ENCODE measurements at regions of chr19 and their contacts with region 1.

Region 1: DNA sequence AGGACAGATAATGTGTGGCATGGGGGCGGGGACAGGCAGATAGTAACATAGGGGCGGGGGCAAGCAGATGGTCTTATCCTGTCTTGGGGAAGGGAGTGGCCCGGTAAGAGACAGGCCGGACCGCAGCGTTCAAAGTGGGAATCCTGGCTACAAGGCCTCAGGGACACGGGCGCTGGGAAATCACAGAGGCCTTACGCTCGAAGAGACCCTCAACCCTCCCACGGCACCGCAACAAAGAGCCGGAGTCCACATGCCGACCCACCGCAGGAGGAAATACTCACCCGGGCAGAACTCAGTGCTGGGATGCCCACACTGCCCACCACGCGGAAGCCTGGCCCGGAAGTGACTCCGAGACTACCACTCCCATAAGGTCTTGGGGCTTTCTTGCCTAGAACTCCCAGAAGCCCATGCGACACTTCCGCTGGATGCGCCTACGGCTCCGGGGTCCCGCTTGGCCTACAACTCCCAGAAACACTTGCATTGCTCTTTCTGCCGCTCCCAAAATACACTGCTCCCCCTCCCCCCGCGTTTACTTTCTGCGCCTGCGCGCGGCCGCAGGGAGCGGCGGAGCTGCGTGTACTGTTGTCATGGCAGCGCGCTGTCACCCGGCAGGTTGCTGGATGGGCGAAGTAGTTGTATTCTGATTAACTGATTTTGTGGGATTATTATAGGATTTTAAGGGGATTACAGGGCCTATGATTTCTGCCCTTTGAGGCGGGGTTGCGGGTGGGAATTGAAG is at the start of gene CTU1:
- DNase-seq: peak; percentile 96 to 99
- ATAC-seq: peak; percentile 98 to 99 (median 99)
- H3K4me3 ChIP-seq: peak within 1 kb of the TSS; percentile 67 to 89 (median 75)
- H3K27ac ChIP-seq: peak within 1 kb of the TSS in 9 of 10 donors; percentile 58 to 86 (median 74)
- H3K4me1 ChIP-seq: peaks cover 0 to 24% (median 17%) of the 10 kb centered on the region in 9 donors
- H3K27me3 ChIP-seq: no peaks in the 10 kb centered on the region
- CTCF ChIP-seq: peak in 2 of 9 donors; percentile 7 to 26
- total RNA-seq, gene CTU1: 2.0 to 5.6 (median 3.2) TPM

Region 2: GRCh38 chr19:50230379-50231351 is 877.6 kb before region 1 on chr19:
- intact Hi-C with region 1: no loop called
- DNase-seq: peak in 1 of 2 donors; percentile 37
- ATAC-seq: peak in 2 of 8 donors; percentile 29 to 57
- H3K4me3 ChIP-seq: no peak overlapping the region
- H3K27ac ChIP-seq: peak overlapping the region in 5 of 10 donors; percentile 6 to 68 (median 58)
- H3K4me1 ChIP-seq: peaks cover 0 to 23% (median 8%) of the 10 kb centered on the region in 9 donors
- H3K27me3 ChIP-seq: no peaks in the 10 kb centered on the region
- CTCF ChIP-seq: no peak

Region 3: GRCh38 chr19:50368649-50369570 is 739.3 kb before region 1 on chr19:
- intact Hi-C with region 1: no loop called
- DNase-seq: peak; percentile 80 to 87
- ATAC-seq: peak; percentile 87 to 97 (median 95)
- H3K4me3 ChIP-seq: peak overlapping the region; percentile 38 to 80 (median 72)
- H3K27ac ChIP-seq: peak overlapping the region in 9 of 10 donors; percentile 59 to 91 (median 80)
- H3K4me1 ChIP-seq: peaks cover 0 to 16% (median 5%) of the 10 kb centered on the region in 9 donors
- H3K27me3 ChIP-seq: no peaks in the 10 kb centered on the region
- CTCF ChIP-seq: peak; percentile 78 to 93 (median 90)

Region 4: DNA sequence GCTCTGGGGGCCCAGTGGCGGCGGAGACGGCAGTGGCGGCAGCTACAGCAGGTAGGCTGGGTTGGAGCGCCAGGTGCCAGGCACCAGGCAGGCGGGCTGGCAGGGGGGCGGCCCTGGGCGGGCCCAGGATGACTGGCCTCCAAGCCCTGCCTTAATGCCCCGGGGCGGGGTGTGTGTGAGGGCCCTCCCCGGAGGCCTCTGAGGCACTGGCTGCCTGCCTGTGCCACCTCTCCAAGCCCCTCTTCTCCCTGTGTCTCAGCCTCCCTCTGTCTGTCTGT is 81.7 kb before region 1 on chr19 and contains the start of gene KLK11:
- intact Hi-C with region 1: no loop called
- DNase-seq: no peak
- ATAC-seq: peak in 2 of 8 donors; percentile 32 to 41
- H3K4me3 ChIP-seq: peak within 1 kb of the TSS in 6 of 10 donors; percentile 7 to 41 (median 13)
- H3K27ac ChIP-seq: peak within 1 kb of the TSS in 3 of 10 donors; percentile 23 to 44 (median 42)
- H3K4me1 ChIP-seq: peaks cover 0 to 16% (median 0%) of the 10 kb centered on the region in 9 donors
- H3K27me3 ChIP-seq: peaks cover 0 to 80% (median 43%) of the 10 kb centered on the region in 7 donors
- CTCF ChIP-seq: no peak
- total RNA-seq, gene KLK11: 0.27 to 0.46 (median 0.36) TPM in 4 of 10 donors, not detected in the others

Region 5: GRCh38 chr19:51166846-51167490 is 58.7 kb after region 1 on chr19:
- intact Hi-C with region 1: loop called in 1 of 10 experiments (anchors 5 kb)
- DNase-seq: no peak
- ATAC-seq: peak in 6 of 8 donors; percentile 58 to 79 (median 62)
- H3K4me3 ChIP-seq: no peak overlapping the region
- H3K27ac ChIP-seq: no peak overlapping the region
- H3K4me1 ChIP-seq: peaks cover 0 to 20% (median 0%) of the 10 kb centered on the region in 9 donors
- H3K27me3 ChIP-seq: peaks cover 0 to 38% (median 19%) of the 10 kb centered on the region in 7 donors
- CTCF ChIP-seq: no peak

Region 6: GRCh38 chr19:51367565-51368365 is 259.5 kb after region 1 on chr19:
- intact Hi-C with region 1: loop called in 1 of 10 experiments (anchors 10 kb)
- DNase-seq: peak; percentile 99
- ATAC-seq: peak; percentile 90 to 96 (median 93)
- H3K4me3 ChIP-seq: peak overlapping the region; percentile 60 to 93 (median 80)
- H3K27ac ChIP-seq: peak overlapping the region; percentile 89 to 98 (median 96)
- H3K4me1 ChIP-seq: peaks cover 0 to 50% (median 24%) of the 10 kb centered on the region in 9 donors
- H3K27me3 ChIP-seq: no peaks in the 10 kb centered on the region
- CTCF ChIP-seq: peak in 1 of 9 donors; percentile 6

Region 7: DNA sequence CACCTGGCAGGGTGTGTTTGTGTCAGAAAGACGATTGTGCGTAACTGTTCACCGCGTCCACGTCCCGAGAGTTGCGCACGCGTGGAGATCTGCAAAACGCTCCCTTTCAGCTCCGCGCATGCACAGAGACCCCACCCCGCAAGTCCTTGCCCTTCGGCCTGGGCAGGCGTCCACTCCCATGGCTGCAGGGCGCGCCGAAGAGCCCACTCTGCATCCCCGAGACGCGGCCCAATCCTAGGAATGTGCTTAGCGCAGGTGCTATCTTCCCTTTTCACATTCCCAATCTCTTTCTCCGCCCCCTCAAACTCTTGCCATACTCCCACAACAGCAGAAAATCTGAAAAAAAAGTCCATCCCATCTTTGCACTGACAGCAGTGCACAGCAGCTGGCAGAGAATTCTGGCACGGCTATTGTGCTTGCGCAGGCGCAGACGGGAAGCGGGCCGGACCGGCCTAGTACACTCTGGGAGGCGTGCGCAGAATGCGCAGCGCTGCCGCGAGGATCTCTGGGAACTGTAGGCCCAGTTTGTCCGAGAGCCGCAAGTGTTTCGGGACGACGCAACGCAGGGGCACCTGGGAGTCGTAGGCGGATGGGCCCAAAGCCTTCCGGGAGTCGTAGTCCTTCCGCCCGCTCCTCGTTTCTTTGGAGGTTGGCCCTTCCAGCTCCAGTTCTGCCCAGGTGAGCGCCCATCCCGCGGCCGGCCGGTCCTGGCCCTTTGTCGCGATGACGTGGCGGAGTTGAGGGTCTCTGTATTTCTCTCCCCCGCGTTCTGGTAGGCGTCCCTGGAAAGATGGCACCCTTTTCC is 485.9 kb after region 1 on chr19:
- intact Hi-C with region 1: loop called in 4 of 10 experiments (anchors 5 to 10 kb)
- DNase-seq: peak; percentile 98 to 99
- ATAC-seq: peak; percentile 99 to 100 (median 100)
- H3K4me3 ChIP-seq: peak overlapping the region; percentile 49 to 84 (median 71)
- H3K27ac ChIP-seq: peak overlapping the region in 9 of 10 donors; percentile 7 to 81 (median 43)
- H3K4me1 ChIP-seq: peaks cover 0 to 17% (median 14%) of the 10 kb centered on the region in 9 donors
- H3K27me3 ChIP-seq: peaks cover 0 to 19% (median 13%) of the 10 kb centered on the region in 7 donors
- CTCF ChIP-seq: no peak

Region 8: GRCh38 chr19:52139252-52140031 is 1031.2 kb after region 1 on chr19 and contains the start of gene ZNF616:
- intact Hi-C with region 1: no loop called
- DNase-seq: peak; percentile 89 to 98
- ATAC-seq: peak; percentile 93 to 100 (median 98)
- H3K4me3 ChIP-seq: peak within 1 kb of the TSS; percentile 61 to 94 (median 80)
- H3K27ac ChIP-seq: peak within 1 kb of the TSS; percentile 42 to 96 (median 92)
- H3K4me1 ChIP-seq: peaks cover 2 to 24% (median 18%) of the 10 kb centered on the region in 9 donors
- H3K27me3 ChIP-seq: no peaks in the 10 kb centered on the region
- CTCF ChIP-seq: peak; percentile 62 to 95 (median 80)
- total RNA-seq, gene ZNF616: 4.9 to 8.0 (median 6.5) TPM

Measured in heart right ventricle (tissue), 16 donors.